ENCODE measurements at regions of chrX and their contacts with region 1.

Region 1: GRCh38 chrX:124388562-124388961 is 42.2 kb downstream of the SH2D1A start:
- DNase-seq: peak; percentile 61
- H3K4me3 Mint-ChIP-seq: no peak overlapping the region
- H3K27ac Mint-ChIP-seq: no peak overlapping the region
- H3K4me1 Mint-ChIP-seq: peaks cover 24% of the 10 kb centered on the region
- H3K27me3 Mint-ChIP-seq: no peaks in the 10 kb centered on the region

Region 2: DNA sequence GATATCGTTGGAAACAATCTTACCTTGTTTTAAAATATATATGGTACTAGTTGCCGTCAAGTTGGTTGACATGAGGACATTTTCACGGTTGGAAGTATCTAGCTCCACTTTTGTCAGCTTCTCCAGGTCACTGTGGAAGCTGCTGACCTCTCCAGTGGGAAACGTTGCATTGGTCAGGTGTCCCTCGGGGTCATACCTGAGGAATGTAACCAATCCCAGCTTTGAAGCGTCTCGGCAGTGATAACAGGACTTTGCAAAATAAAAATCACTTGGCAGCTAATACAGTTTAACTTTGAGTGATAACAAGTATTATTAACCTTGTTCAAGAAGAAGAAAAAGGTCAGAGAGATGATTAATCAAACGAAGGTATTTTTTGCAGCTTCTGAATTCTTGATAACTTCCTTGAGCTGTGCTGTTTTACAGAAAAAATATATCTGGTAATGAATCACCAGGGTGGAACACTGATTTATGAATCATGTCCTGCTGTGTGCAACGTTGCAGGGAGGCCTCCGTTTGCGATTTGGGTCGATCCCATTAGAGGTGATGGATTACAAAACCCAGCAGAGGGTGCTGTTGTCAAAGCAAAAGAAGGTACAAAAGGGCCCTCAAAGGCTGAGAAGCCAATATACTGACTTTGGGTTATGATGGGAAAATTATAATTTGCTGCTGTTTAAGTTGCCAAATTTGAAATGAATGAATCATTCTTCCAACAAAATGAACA is 17.9 kb after region 1 on chrX:
- CTCF ChIA-PET with region 1: interaction called, 12 read pairs
- DNase-seq: peak; percentile 67
- H3K4me3 Mint-ChIP-seq: no peak overlapping the region
- H3K27ac Mint-ChIP-seq: no peak overlapping the region
- H3K4me1 Mint-ChIP-seq: peaks cover 2% of the 10 kb centered on the region
- H3K27me3 Mint-ChIP-seq: peaks cover 7% of the 10 kb centered on the region